ENCODE measurements at regions of chr20 and their contacts with region 1.

Region 1: GRCh38 chr20:31500527-31500926 is 13.7 kb upstream of the HM13 start:
- DNase-seq: no peak
- H3K4me3 ChIP-seq: no peak overlapping the region
- H3K27ac ChIP-seq: no peak overlapping the region
- H3K27me3 ChIP-seq: peaks cover 11% of the 10 kb centered on the region
- CTCF ChIP-seq: no peak

Region 2: GRCh38 chr20:31474097-31474436 is 26.5 kb before region 1 on chr20:
- CTCF ChIA-PET with region 1: interaction called, 20 read pairs
- POLR2A ChIA-PET with region 1: no interaction called
- DNase-seq: no peak
- H3K4me3 ChIP-seq: no peak overlapping the region
- H3K27ac ChIP-seq: no peak overlapping the region
- H3K27me3 ChIP-seq: peaks cover 31% of the 10 kb centered on the region
- CTCF ChIP-seq: no peak

Region 3: GRCh38 chr20:31514159-31515071 is 13.9 kb after region 1 on chr20 and contains the start of gene HM13:
- CTCF ChIA-PET with region 1: interaction called, 20 read pairs
- POLR2A ChIA-PET with region 1: no interaction called
- DNase-seq: peak; percentile 86
- H3K4me3 ChIP-seq: peak within 1 kb of the TSS; percentile 99
- H3K27ac ChIP-seq: peak within 1 kb of the TSS; percentile 75
- H3K27me3 ChIP-seq: peaks cover 2% of the 10 kb centered on the region
- CTCF ChIP-seq: peak; percentile 79
- polyA plus RNA-seq, gene HM13: 167 and 203 TPM in 2 replicates